Dorsolateral prefrontal cortex (tissue), 120 donors: ENCODE measurements at regions of chr4 and their contacts with region 1.

Region 1: GRCh38 chr4:6709230-6710114 is at the start of gene MRFAP1L1:
- DNase-seq: peak; percentile 92 to 96 (median 94)
- H3K4me3 ChIP-seq: peak within 1 kb of the TSS; percentile 57 to 99 (median 89)
- H3K27ac ChIP-seq: peak within 1 kb of the TSS; percentile 53 to 97 (median 89)
- H3K27me3 ChIP-seq: no peaks in the 10 kb centered on the region
- CTCF ChIP-seq: peak in 37 of 56 donors; percentile 3 to 58 (median 33)
- total RNA-seq, gene MRFAP1L1: 52.0 to 117 (median 80.0) TPM

Region 2: GRCh38 chr4:6640292-6641163 is 68.9 kb before region 1 on chr4 and contains the start of gene MRFAP1:
- intact Hi-C with region 1: loop called (anchors 1 to 2 kb)
- DNase-seq: peak; percentile 88 to 93 (median 93)
- H3K4me3 ChIP-seq: peak within 1 kb of the TSS; percentile 68 to 98 (median 92)
- H3K27ac ChIP-seq: peak within 1 kb of the TSS; percentile 66 to 99 (median 96)
- H3K27me3 ChIP-seq: no peaks in the 10 kb centered on the region
- CTCF ChIP-seq: peak in 25 of 56 donors; percentile 9 to 53 (median 29)
- total RNA-seq, gene MRFAP1: 242 to 474 (median 356) TPM

Region 3: GRCh38 chr4:6673660-6674499 is 35.6 kb before region 1 on chr4:
- intact Hi-C with region 1: loop called (anchors 2 to 5 kb)
- DNase-seq: peak; percentile 90 to 96 (median 94)
- H3K4me3 ChIP-seq: peak overlapping the region; percentile 45 to 91 (median 79)
- H3K27ac ChIP-seq: peak overlapping the region; percentile 30 to 98 (median 91)
- H3K27me3 ChIP-seq: no peaks in the 10 kb centered on the region
- CTCF ChIP-seq: peak in 52 of 56 donors; percentile 9 to 62 (median 34)

Region 4: DNA sequence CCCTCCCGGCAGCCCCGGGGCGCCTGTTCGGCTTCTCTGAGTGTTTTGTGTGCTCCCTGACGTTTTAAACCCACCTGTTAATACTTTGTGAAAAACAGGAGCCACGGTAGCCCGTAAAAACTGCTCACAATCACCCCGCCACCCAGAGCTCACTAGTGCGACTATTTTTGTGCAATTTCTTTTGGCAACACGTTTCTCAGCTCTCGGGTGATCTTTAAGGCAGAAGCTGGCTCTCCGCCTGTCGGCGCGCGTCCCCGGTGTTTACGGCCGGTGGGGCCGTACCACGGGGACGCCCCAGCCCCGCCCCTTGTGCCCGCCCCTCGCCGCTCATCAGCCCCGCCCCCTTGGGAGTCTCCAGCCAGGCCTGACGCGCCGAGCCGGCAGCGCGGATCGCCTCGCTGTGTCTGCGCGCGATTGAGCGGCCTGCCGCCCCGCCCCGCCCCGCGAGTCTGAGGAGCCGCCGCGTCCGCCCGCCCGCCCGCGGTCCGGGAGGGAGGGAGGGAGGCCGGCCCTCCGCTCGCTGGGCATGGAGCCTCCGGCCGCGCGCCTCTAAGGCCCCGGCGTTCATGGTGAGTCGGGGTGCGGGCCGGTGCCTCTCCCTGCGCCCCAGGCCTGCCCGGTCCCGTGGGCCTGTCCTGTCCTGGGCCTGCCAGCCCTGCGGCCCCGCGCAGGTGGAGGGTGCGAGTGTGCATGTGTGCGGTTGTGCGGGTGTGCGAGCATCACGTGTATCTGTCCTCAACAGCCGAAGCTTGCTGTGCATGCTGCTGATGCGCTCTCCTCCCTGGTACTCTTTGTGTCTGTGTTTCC is 277.5 kb after region 1 on chr4:
- intact Hi-C with region 1: loop called (anchors 5 to 10 kb)
- DNase-seq: peak; percentile 91 to 98 (median 95)
- H3K4me3 ChIP-seq: peak overlapping the region; percentile 59 to 98 (median 91)
- H3K27ac ChIP-seq: peak overlapping the region; percentile 59 to 99 (median 96)
- H3K27me3 ChIP-seq: no peaks in the 10 kb centered on the region
- CTCF ChIP-seq: peak in 26 of 56 donors; percentile 7 to 56 (median 32)